Activated CD4-positive, alpha-beta memory T cell treated with anti-CD3 and anti-CD28 coated beads for 36 hours (primary cell): ENCODE measurements at regions of chr2 and their contacts with region 1.

Region 1: GRCh38 chr2:108048752-108049151 is 62.4 kb downstream of the SLC5A7 start:
- DNase-seq: no peak
- H3K4me3 Mint-ChIP-seq: no peak overlapping the region
- H3K27ac Mint-ChIP-seq: no peak overlapping the region
- H3K4me1 Mint-ChIP-seq: no peaks in the 10 kb centered on the region
- H3K27me3 Mint-ChIP-seq: no peaks in the 10 kb centered on the region

Region 2: DNA sequence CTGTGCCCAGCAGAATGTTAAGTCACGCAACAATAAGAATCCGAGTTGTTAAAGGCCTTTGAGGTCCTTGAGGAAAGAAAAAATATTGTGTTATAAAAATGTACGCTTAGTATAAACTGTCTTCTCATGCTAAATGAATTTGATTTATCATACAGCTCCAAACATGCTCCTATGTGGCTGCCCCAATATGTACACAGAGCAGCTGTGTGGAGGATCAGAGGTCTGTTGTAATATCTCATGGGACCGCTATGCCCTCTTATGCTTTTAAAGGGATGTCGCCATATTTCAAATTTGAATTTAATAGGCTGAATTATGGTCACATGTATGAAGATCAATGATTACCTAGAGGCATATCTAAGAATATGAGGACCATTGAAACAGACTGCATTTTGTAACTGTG is 27.8 kb after region 1 on chr2:
- CTCF ChIA-PET with region 1: no interaction called
- POLR2A ChIA-PET with region 1: no interaction called
- intact Hi-C with region 1: loop called (anchors 1 kb)
- DNase-seq: no peak
- H3K4me3 Mint-ChIP-seq: no peak overlapping the region
- H3K27ac Mint-ChIP-seq: no peak overlapping the region
- H3K4me1 Mint-ChIP-seq: no peaks in the 10 kb centered on the region
- H3K27me3 Mint-ChIP-seq: no peaks in the 10 kb centered on the region